ENCODE measurements at regions of chr1 and their contacts with region 1.

Region 1: DNA sequence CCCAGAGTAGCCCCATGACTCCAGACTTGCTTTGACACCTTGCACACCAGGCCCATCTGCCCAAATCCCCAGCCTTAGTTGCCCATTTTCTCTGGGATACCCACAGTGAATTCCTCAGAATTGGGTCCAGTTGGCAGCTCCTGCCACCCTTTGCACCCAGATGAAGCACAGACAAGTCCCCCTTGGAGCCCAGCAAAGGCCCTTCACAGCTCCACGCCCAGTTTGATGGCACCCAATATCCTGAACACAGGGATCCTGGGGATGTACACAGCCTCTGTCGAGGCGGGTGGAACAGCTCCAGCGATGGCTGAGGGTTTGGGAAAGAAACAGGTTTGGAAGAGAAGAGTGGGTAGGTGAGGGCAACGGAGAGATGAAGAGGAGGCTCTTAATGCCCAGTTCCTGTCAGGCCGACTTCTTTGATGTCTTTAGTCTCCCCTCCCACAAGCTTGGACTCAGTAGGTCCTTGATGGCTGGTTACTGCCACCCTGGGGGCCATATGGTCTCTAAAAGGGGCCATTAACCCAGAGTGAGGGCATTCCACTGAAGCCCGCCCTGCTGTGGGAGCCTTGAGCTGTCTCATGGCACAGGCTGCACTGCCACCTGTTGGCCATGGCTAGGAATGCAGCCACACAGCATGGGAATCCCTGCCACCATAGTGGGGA is 21.7 kb downstream of the TMEM53 start:
- DNase-seq: peak; percentile 51 to 83 (median 67)
- H3K4me3 ChIP-seq: no peak overlapping the region
- H3K4me3 Mint-ChIP-seq: no peak overlapping the region
- H3K27ac ChIP-seq: no peak overlapping the region
- H3K27ac Mint-ChIP-seq: peak overlapping the region in 5 of 8 donors; percentile 44 to 68 (median 50)
- H3K4me1 ChIP-seq: no peaks in the 10 kb centered on the region
- H3K4me1 Mint-ChIP-seq: peaks cover 0 to 1% (median 0%) of the 10 kb centered on the region in 3 donors
- H3K27me3 ChIP-seq: no peaks in the 10 kb centered on the region
- H3K27me3 Mint-ChIP-seq: no peaks in the 10 kb centered on the region

Region 2: GRCh38 chr1:44377925-44378784 is 274.4 kb before region 1 on chr1:
- CTCF ChIA-PET with region 1: interaction called, 26 read pairs
- POLR2A ChIA-PET with region 1: no interaction called
- DNase-seq: peak; percentile 7 to 57 (median 11)
- H3K4me3 ChIP-seq: no peak overlapping the region
- H3K4me3 Mint-ChIP-seq: no peak overlapping the region
- H3K27ac ChIP-seq: no peak overlapping the region
- H3K27ac Mint-ChIP-seq: no peak overlapping the region
- H3K4me1 ChIP-seq: no peaks in the 10 kb centered on the region
- H3K4me1 Mint-ChIP-seq: no peaks in the 10 kb centered on the region
- H3K27me3 ChIP-seq: no peaks in the 10 kb centered on the region
- H3K27me3 Mint-ChIP-seq: peaks cover 0 to 9% of the 10 kb centered on the region in 2 donors

Region 3: GRCh38 chr1:44594871-44595746 is 57.5 kb before region 1 on chr1:
- CTCF ChIA-PET with region 1: interaction called, 14 read pairs
- POLR2A ChIA-PET with region 1: no interaction called
- DNase-seq: peak; percentile 41 to 78 (median 64)
- H3K4me3 ChIP-seq: no peak overlapping the region
- H3K4me3 Mint-ChIP-seq: no peak overlapping the region
- H3K27ac ChIP-seq: no peak overlapping the region
- H3K27ac Mint-ChIP-seq: no peak overlapping the region
- H3K4me1 ChIP-seq: no peaks in the 10 kb centered on the region
- H3K4me1 Mint-ChIP-seq: no peaks in the 10 kb centered on the region
- H3K27me3 ChIP-seq: no peaks in the 10 kb centered on the region
- H3K27me3 Mint-ChIP-seq: peaks cover 3 to 11% of the 10 kb centered on the region in 2 donors

Region 4: DNA sequence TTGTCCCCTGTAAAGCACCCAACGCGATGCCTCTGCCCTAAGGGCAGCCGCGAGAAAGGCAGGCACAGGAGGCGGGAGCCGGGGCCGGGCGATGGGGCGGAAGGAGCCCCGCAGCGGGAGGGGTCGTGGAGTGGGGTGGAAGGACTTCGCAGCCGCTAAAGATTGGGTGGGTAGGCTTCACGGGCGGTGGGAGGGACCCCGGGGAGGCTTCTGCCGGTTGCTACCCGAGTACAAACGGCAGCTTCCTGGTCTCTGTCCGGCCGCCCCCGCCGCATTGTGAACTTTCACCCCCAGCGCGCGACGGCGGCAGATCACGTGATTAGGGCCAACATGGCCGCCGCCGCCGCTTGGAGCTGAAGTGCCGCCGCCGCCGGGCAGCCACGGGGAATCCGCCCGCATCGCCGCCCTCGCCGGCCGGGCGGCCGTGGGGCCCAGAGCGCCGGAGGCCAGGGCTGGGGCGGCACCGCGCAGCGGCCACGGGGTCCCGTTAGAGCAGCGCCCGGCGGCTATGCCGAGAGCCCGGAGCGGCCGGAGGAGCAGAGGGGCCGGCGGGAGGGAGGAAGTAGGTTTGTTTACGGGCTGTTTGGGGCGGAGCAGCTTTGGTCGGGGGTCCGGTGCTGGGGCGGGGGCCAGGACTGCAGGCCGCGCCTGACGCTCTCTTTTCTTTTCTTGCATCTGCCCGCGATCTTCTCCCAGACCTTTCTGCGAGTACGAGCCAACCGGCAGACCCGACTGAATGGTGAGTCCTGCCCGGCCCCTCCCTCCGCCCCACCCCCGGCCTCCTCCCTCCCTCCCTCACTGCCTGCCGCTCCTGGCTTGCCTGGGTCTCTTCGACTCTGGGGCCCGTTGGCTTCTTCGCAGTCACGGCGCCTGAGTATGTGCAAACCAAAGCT is 20.7 kb before region 1 on chr1:
- CTCF ChIA-PET with region 1: interaction called, 43 read pairs
- POLR2A ChIA-PET with region 1: interaction called, 5 read pairs
- DNase-seq: peak; percentile 84 to 92 (median 85)
- H3K4me3 ChIP-seq: peak overlapping the region; percentile 79
- H3K4me3 Mint-ChIP-seq: peak overlapping the region; percentile 91 to 98 (median 93)
- H3K27ac ChIP-seq: peak overlapping the region; percentile 83
- H3K27ac Mint-ChIP-seq: peak overlapping the region; percentile 96 to 100 (median 98)
- H3K4me1 ChIP-seq: peaks cover 28% of the 10 kb centered on the region
- H3K4me1 Mint-ChIP-seq: peaks cover 42 to 52% (median 49%) of the 10 kb centered on the region in 3 donors
- H3K27me3 ChIP-seq: no peaks in the 10 kb centered on the region
- H3K27me3 Mint-ChIP-seq: no peaks in the 10 kb centered on the region

Region 5: DNA sequence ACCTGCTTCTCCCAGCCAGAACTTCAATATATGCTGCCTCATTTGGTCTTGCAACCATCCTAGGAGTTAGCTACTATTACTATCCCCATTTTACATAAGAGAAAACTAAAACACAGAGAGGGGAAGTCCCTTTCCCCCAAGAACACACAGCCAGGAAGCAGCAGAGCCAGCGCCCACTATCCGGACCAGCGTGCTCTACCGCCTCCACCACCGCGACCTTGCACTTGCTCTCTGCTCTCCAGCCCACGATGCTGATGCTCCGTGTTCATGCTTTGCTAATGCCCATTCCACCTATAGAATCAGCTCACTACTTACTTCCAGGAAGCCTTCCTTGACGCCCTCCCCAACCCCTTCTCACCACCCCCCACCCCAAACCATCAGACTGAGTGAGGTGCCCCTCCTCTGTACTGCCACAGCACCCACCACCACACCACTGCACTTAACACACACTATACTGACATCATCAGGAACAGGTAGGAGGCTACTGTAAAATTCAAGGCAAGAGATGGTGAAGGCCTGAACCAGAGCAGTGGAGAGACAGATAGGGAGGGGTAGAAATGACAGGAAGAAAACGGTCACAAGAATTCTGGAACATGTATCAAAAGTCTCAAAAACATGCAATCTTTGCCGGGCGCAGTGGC is 12.3 kb after region 1 on chr1:
- CTCF ChIA-PET with region 1: interaction called, 17 read pairs
- POLR2A ChIA-PET with region 1: no interaction called
- DNase-seq: no peak
- H3K4me3 ChIP-seq: no peak overlapping the region
- H3K4me3 Mint-ChIP-seq: peak overlapping the region in 4 of 7 donors; percentile 3 to 36 (median 22)
- H3K27ac ChIP-seq: no peak overlapping the region
- H3K27ac Mint-ChIP-seq: peak overlapping the region in 7 of 8 donors; percentile 3 to 58 (median 48)
- H3K4me1 ChIP-seq: peaks cover 8% of the 10 kb centered on the region
- H3K4me1 Mint-ChIP-seq: peaks cover 10 to 14% (median 10%) of the 10 kb centered on the region in 3 donors
- H3K27me3 ChIP-seq: no peaks in the 10 kb centered on the region
- H3K27me3 Mint-ChIP-seq: no peaks in the 10 kb centered on the region

Region 6: GRCh38 chr1:44907893-44908292 is 255.3 kb after region 1 on chr1:
- CTCF ChIA-PET with region 1: no interaction called
- POLR2A ChIA-PET with region 1: no interaction called
- DNase-seq: no peak
- H3K4me3 ChIP-seq: no peak overlapping the region
- H3K4me3 Mint-ChIP-seq: no peak overlapping the region
- H3K27ac ChIP-seq: no peak overlapping the region
- H3K27ac Mint-ChIP-seq: peak overlapping the region in 1 of 8 donors; percentile 57
- H3K4me1 ChIP-seq: no peaks in the 10 kb centered on the region
- H3K4me1 Mint-ChIP-seq: no peaks in the 10 kb centered on the region
- H3K27me3 ChIP-seq: no peaks in the 10 kb centered on the region
- H3K27me3 Mint-ChIP-seq: no peaks in the 10 kb centered on the region

Measured in CD8-positive, alpha-beta memory T cell (primary cell).